Right ventricle myocardium inferior (tissue), 1 donor: ENCODE measurements at regions of chr12 and their contacts with region 1.

Region 1: GRCh38 chr12:55659486-55660385 is 23.0 kb downstream of the OR10P1 start:
- DNase-seq: no peak
- ATAC-seq: peak; percentile 92

Region 2: DNA sequence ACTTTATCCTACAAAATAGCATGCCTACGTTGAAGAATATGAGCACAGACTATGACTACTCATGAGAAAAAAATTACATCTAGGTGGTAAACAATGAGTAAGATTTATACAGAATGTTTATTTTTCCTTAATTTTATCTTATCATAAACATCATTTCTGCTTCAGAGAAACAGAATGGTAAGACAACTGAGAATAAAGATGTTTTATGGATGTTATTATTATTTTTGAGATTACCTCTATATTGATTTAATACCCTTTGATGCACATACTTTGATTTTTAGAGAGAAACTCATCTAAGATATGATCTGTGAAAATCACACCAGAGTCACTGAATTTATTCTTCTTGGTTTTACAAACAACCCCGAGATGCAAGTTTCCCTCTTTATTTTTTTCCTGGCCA is 439.0 kb before region 1 on chr12 and contains the start of gene OR10A7:
- intact Hi-C with region 1: no loop called
- DNase-seq: no peak
- ATAC-seq: no peak
- total RNA-seq, gene OR10A7: not detected

Region 3: DNA sequence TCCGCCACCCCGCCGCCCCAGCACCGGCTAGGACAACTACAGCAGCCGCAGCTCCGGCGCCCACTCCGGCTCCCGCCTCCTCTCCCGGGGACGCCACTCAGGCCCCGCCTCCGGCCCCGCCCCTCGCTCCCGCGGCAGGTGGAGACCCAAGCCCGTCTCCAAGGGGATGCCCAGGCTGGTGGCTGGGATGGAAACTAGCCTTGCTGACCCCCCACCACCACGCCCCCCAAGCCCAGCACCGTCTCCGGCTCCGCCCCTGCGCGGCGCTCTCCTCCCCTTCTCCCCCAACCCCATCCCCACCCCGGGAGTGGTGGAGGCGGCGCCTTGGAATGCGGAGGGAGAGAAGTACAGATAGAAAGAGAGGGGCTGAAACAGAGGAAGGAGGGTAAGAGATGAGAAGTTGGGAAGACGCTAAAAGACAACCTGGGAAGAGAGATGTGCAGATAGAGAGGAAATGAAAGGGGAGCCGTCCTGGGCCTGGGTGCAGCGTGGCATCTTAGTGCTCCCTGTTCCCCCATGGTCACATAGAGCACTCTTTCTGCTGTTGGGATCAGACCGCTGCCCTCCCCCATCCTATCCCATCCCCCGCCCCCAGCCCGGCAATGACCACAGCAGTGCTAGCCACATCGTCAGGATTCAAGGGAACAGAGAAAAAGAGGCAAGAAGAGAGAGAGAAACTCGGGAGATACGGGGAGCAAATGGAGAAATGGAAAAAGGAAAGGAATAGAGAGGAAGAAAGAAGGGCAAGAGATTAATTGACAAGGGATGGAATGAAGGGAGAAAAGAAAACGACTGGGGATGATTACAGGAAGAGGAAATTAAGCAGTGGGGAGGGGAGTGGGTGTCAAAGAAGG is 48.3 kb after region 1 on chr12 and contains the start of gene ITGA7:
- intact Hi-C with region 1: loop called (anchors 5 kb)
- DNase-seq: peak; percentile 87
- ATAC-seq: peak; percentile 55
- total RNA-seq, gene ITGA7: 479 TPM